ENCODE measurements at regions of chr1 and their contacts with region 1.

Region 1: DNA sequence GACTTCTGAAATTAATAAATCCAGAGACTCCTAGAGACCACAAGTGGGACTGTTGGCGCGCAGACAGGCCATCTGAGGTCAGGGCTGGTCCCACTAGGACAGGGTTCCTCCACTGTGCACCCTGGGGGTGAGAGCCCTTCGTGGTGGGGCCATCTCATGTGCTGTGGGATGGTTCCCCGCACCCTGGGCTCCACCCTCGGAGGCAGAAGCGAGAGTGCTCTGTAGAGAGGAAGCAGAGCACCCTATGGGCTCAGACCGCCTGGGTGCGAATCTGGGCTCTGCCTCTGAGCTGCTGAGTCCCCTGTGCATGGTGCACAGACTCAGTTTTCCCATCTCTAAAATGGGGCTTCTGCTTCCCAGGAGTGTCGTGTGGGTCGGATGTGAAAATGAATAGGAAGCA is 227.3 kb downstream of the NPHP4 start:
- DNase-seq: no peak
- ATAC-seq: no peak
- H3K4me3 Mint-ChIP-seq: no peak overlapping the region
- H3K27ac Mint-ChIP-seq: no peak overlapping the region
- H3K4me1 Mint-ChIP-seq: peaks cover 50% of the 10 kb centered on the region
- H3K27me3 Mint-ChIP-seq: peaks cover 4% of the 10 kb centered on the region; the same call in 1 of the 2 replicates
- CTCF ChIP-seq: no peak

Region 2: DNA sequence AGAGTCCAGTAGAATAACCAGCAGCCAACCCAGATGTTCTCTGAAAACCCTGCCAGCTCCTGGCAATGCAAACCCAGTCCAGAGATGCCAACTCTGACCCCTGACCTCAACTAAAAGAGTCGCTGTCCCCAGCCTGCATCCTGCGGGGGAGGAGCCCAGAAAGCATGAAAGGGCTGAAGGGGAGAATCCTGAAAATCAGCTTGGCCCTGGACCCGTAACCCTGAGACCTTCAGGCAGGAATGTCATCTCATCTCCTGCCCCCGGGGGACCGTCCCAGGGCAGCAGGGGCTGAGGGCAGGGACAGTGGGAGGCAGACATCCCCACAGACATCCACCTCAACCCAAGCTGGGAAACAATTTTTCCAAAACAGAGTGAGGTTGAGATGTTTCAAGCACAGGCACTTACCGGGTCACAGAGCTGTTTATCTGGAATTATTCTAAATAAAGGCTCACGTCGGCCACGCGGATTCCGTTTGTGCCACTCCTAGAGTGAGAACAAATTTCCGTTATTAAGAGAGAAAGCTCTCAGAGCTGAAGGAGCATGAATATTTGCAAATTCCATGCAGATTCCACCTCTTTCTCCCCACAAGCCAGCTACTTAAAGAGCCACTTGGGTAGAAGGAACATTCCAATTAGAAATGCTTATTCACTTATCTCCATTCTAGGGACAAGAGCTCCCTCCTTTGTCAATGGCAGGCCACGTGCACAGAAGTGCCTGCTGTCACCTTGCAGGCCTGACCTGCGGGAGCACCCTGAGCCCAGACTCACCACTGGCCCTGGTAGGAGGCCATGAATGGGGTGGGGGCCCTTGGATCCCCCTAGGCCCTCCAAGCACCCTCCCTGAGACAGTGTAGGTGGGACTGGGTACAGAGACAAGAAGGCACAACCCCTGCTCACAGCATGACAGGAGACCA is 12.9 kb before region 1 on chr1:
- CTCF ChIA-PET with region 1: interaction called, 12 read pairs
- POLR2A ChIA-PET with region 1: interaction called, 3 read pairs
- DNase-seq: no peak
- ATAC-seq: peak; percentile 29
- H3K4me3 Mint-ChIP-seq: no peak overlapping the region
- H3K27ac Mint-ChIP-seq: no peak overlapping the region; the same call in 1 of the 2 replicates
- H3K4me1 Mint-ChIP-seq: peaks cover 41% of the 10 kb centered on the region
- H3K27me3 Mint-ChIP-seq: no peaks in the 10 kb centered on the region; the same call in 1 of the 2 replicates
- CTCF ChIP-seq: no peak